Transverse colon (tissue), 4 donors: ENCODE measurements at regions of chr6 and their contacts with region 1.

Region 1: DNA sequence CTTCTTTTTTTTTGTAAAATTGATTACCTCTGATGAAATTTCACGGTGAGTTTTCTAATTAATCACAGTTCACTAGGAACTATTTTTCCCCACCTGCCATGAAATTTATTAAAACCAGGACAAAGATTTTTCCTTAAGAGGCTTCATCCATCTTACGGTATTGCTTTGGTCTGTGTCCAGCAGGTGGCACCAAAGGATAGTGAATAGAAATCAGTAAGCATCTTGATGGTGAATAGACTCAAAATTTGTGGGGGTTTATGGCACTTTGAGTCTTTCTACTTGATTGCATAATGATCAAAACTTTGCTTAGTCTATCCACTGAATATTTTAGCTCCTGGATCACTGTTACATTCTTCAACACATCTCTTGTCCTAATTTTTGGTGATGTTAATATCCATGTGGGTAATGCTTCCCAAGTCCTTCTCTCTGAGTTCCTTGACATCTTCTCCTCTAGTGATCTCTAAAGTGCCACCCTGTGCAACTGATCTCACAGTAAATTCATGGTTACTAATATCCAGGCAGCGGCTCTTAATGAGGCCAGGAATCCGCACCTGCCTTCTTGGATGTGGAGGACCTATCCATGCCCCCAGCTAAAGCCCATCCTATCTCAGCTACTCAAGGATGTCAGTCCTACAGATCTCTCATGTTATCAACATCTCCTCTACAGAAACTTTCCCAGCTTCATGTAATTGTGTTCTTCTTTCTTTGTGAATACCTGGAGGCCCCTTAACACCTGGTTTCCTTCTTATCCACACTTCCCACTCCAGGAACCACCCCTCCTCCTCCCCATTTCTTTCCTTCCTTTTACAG is 54.5 kb downstream of the STMND1 start:
- DNase-seq: peak; percentile 76
- H3K4me3 ChIP-seq: no peak overlapping the region
- H3K27ac ChIP-seq: no peak overlapping the region
- H3K4me1 ChIP-seq: peaks cover 0 to 16% (median 4%) of the 10 kb centered on the region in 4 donors
- H3K27me3 ChIP-seq: no peaks in the 10 kb centered on the region
- CTCF ChIP-seq: peak; percentile 70 to 85 (median 75)
- EP300 ChIP-seq: no peak
- POLR2A ChIP-seq: no peak

Region 2: GRCh38 chr6:17574866-17575560 is 418.7 kb after region 1 on chr6:
- in situ Hi-C with region 1: loop called in 2 of 4 experiments (anchors 5 to 10 kb)
- intact Hi-C with region 1: loop called (anchors 1 kb)
- DNase-seq: no peak
- H3K4me3 ChIP-seq: no peak overlapping the region
- H3K27ac ChIP-seq: no peak overlapping the region
- H3K4me1 ChIP-seq: peaks cover 0 to 3% (median 0%) of the 10 kb centered on the region in 4 donors
- H3K27me3 ChIP-seq: no peaks in the 10 kb centered on the region
- CTCF ChIP-seq: no peak
- EP300 ChIP-seq: no peak
- POLR2A ChIP-seq: no peak

Region 3: GRCh38 chr6:17584241-17584803 is 428.0 kb after region 1 on chr6:
- in situ Hi-C with region 1: loop called in 3 of 4 experiments (anchors 5 to 10 kb)
- intact Hi-C with region 1: no loop called
- DNase-seq: no peak
- H3K4me3 ChIP-seq: peak overlapping the region in 1 of 4 donors; percentile 21
- H3K27ac ChIP-seq: peak overlapping the region; percentile 58 to 81 (median 73)
- H3K4me1 ChIP-seq: peaks cover 5 to 40% (median 16%) of the 10 kb centered on the region in 4 donors
- H3K27me3 ChIP-seq: no peaks in the 10 kb centered on the region
- CTCF ChIP-seq: peak; percentile 71 to 95 (median 77)
- EP300 ChIP-seq: no peak
- POLR2A ChIP-seq: no peak

Region 4: DNA sequence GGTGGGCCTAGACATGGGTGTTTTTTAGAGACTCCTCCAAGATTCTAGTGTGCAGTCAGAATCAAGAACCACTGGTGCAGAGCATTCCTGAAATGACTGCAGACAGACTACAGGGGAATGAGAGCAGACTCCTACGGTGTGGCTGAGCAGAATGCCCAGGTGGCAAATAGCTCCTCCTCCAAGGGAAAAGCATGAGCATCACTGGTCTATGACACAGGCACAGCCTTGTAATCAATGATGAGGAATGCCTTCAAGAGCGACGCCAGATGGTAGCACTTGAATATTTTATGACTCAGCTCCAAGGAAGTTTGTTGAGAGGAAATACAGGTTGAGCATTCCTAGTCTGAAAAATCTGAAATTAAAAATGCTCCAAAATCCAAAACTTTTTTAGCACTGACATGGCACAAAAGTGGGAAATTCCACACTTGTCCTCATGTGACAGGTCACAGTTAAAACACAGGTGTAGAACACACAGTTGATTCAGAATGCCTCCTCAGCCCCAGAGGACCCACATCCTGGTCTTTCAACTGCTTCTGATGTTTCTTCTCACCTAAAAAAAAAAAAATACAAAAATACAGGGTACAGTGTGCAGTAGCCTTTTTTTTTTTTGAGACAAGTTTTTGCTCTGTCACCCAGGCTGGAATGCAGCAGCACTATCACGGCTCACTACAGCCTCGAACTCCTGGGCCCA is 433.2 kb after region 1 on chr6:
- in situ Hi-C with region 1: loop called (anchors 5 to 10 kb)
- intact Hi-C with region 1: no loop called
- DNase-seq: peak; percentile 65
- H3K4me3 ChIP-seq: no peak overlapping the region
- H3K27ac ChIP-seq: peak overlapping the region; percentile 16 to 71 (median 62)
- H3K4me1 ChIP-seq: peaks cover 0 to 25% (median 12%) of the 10 kb centered on the region in 4 donors
- H3K27me3 ChIP-seq: no peaks in the 10 kb centered on the region
- CTCF ChIP-seq: peak in 2 of 5 experiments; percentile 2 to 19
- EP300 ChIP-seq: no peak
- POLR2A ChIP-seq: no peak

Region 5: DNA sequence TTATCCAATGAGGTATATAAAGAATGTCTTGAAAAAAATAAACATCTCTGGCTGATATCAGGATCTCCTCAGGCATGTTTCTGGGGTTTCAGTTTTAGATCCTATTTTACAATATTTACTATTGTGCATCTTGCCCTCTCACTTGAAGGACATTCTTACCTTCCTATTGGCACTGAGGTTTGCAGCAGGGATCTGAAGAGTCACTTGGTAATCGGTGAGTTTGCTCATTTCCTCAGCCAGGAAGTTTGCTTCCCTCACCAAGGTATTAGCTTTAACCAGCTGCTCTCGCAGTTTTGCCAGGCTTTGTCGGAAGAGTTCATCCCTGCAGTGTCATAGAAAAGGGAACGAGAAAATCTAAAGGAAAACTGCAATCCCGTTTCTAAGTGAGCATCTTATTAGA is 652.3 kb after region 1 on chr6:
- in situ Hi-C with region 1: loop called (anchors 5 to 25 kb)
- intact Hi-C with region 1: loop called (anchors 10 kb)
- DNase-seq: no peak
- H3K4me3 ChIP-seq: no peak overlapping the region
- H3K27ac ChIP-seq: no peak overlapping the region
- H3K4me1 ChIP-seq: no peaks in the 10 kb centered on the region
- H3K27me3 ChIP-seq: no peaks in the 10 kb centered on the region
- CTCF ChIP-seq: no peak
- EP300 ChIP-seq: no peak
- POLR2A ChIP-seq: no peak

Region 6: GRCh38 chr6:17820055-17820454 is 663.7 kb after region 1 on chr6:
- in situ Hi-C with region 1: loop called in 1 of 4 experiments (anchors 25 kb)
- intact Hi-C with region 1: no loop called
- DNase-seq: no peak
- H3K4me3 ChIP-seq: no peak overlapping the region
- H3K27ac ChIP-seq: no peak overlapping the region
- H3K4me1 ChIP-seq: no peaks in the 10 kb centered on the region
- H3K27me3 ChIP-seq: no peaks in the 10 kb centered on the region
- CTCF ChIP-seq: no peak
- EP300 ChIP-seq: no peak
- POLR2A ChIP-seq: no peak

Region 7: DNA sequence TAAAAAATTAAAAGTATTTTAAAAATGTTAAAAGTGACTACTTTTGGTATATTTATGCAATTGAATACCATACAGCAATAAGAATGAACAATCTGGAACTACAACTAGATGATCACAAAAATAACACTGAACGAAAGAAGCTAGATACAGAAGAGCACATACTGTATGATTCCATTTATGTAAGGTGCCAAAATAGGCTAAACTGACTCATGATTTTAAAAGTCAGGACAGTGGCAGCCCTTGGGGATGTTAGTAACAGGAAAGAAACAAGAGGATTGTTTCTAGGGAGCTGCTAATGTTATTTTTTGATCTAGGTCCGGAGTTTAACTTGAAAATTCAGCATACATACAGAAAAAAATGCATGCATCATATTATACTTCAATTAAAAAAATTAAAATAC is 788.8 kb after region 1 on chr6:
- in situ Hi-C with region 1: no loop called
- intact Hi-C with region 1: no loop called
- DNase-seq: no peak
- H3K4me3 ChIP-seq: no peak overlapping the region
- H3K27ac ChIP-seq: peak overlapping the region in 2 of 4 donors; percentile 14 to 34
- H3K4me1 ChIP-seq: peaks cover 0 to 23% (median 3%) of the 10 kb centered on the region in 4 donors
- H3K27me3 ChIP-seq: no peaks in the 10 kb centered on the region
- CTCF ChIP-seq: no peak
- EP300 ChIP-seq: no peak
- POLR2A ChIP-seq: no peak

Region 8: DNA sequence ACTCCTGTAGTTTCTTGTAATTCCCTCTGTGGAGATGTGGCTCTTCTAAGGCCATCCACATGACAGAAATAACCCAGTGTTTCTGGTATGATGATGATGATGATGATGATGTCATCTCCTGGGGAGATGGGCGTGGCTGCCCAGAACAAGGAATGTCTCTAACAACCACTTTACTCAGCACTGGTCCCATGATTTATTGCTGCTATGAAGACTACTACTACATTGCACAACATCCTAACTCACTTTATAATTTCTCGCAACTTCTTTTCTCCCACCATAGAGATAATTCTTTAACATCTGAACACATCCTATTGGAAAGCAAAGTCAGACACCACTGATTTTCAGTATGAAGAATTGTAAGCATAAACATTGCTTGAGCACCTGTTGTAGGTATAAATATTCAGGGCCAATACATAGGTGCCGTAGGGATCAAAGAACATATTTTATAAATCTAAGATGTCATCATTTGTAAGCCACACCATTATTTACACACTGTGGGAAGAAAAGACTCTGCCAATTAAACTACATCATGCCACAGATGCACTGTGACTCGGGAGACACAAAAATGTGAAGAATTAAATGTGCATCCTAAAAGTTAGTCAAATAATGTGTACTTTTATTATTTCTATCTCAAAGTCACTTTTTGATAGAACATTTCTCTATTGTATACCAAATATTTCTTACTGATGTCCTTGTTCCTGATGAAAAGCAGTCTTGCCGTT is 992.1 kb after region 1 on chr6:
- in situ Hi-C with region 1: loop called in 1 of 4 experiments (anchors 25 kb)
- intact Hi-C with region 1: no loop called
- DNase-seq: peak; percentile 58
- H3K4me3 ChIP-seq: no peak overlapping the region
- H3K27ac ChIP-seq: peak overlapping the region; percentile 27 to 74 (median 58)
- H3K4me1 ChIP-seq: peaks cover 0 to 30% (median 18%) of the 10 kb centered on the region in 4 donors
- H3K27me3 ChIP-seq: no peaks in the 10 kb centered on the region
- CTCF ChIP-seq: no peak
- EP300 ChIP-seq: no peak
- POLR2A ChIP-seq: no peak